ENCODE measurements at regions of chr7 and their contacts with region 1.

Region 1: DNA sequence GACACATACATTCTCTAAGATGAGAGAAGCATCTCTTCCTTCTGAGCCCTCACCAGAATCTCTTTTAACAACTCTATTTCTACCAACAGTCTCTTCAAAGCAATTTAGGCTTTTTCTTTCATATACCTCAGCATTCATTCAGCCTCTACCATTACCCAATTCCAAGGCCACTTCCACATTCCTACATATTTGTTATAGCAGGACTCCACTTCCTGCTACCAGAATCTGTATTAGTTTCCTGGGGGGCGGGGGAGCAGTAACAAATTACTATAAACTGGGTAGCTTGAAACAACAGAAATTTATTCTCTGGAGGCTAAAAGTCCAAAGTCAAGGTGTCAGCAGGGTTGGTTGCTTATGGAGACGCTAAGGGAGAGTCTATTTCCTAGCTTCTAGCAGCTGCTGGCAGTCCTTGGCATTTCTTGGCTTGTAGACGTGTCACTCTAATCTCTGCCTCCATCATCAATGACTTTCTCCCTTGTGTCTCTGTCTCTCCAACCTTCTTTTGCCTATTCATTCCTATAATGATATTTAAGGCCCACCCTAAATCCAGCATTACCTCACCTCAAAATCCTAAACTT is 7.4 kb downstream of the PRPS1L1 start:
- DNase-seq: no peak
- ATAC-seq: peak in 2 of 4 donors; percentile 16 to 23
- H3K4me3 ChIP-seq: no peak overlapping the region
- H3K27ac ChIP-seq: no peak overlapping the region
- H3K4me1 ChIP-seq: peaks cover 0 to 6% (median 0%) of the 10 kb centered on the region in 4 donors
- H3K27me3 ChIP-seq: no peaks in the 10 kb centered on the region
- CTCF ChIP-seq: no peak
- POLR2A ChIP-seq: no peak

Region 2: GRCh38 chr7:17965603-17966002 is 54.6 kb before region 1 on chr7:
- intact Hi-C with region 1: loop called in 1 of 2 experiments (anchors 10 kb)
- DNase-seq: no peak
- ATAC-seq: peak in 1 of 4 donors; percentile 41
- H3K4me3 ChIP-seq: no peak overlapping the region
- H3K27ac ChIP-seq: no peak overlapping the region
- H3K4me1 ChIP-seq: no peaks in the 10 kb centered on the region
- H3K27me3 ChIP-seq: no peaks in the 10 kb centered on the region
- CTCF ChIP-seq: no peak
- POLR2A ChIP-seq: no peak

Region 3: GRCh38 chr7:18250133-18250532 is 229.9 kb after region 1 on chr7:
- intact Hi-C with region 1: no loop called
- DNase-seq: no peak
- ATAC-seq: no peak
- H3K4me3 ChIP-seq: no peak overlapping the region
- H3K27ac ChIP-seq: no peak overlapping the region
- H3K4me1 ChIP-seq: no peaks in the 10 kb centered on the region
- H3K27me3 ChIP-seq: no peaks in the 10 kb centered on the region
- CTCF ChIP-seq: no peak
- POLR2A ChIP-seq: no peak